Activated CD8-positive, alpha-beta memory T cell treated with anti-CD3 and anti-CD28 coated beads, Interleukin-2, amount 10 ng/mL, durations not matched to agents 7 days and 5 days (primary cell): ENCODE measurements at regions of chr16 and their contacts with region 1.

Region 1: DNA sequence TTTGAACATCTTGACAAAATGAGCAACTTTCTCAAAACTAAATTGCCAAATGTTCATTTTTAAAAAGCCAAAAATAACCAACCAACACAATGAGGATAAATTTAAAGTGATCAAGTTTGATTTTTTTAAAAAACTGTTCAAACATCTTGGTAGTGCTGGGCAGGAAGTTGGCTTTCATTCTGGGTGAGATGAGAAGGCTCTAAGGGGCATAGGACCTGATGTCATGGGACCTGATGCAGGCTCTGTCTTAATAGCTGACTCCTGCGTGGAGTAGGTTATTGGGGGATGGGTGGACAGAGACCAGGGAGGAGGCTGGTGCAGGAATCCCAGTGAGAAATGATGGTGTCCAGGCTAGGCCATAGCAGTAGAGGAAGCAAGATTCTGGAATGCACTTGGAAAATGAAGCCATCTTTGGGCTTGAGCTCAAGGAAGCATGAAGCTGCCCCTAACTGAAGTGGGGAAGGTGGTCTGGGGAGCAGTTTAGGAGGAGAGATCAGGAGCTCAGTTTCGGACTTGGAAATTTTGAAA is 20.4 kb downstream of the NLRC5 start:
- DNase-seq: no peak
- ATAC-seq: peak; percentile 35
- H3K4me3 Mint-ChIP-seq: peak overlapping the region; percentile 32
- H3K27ac Mint-ChIP-seq: peak overlapping the region; percentile 89
- H3K4me1 Mint-ChIP-seq: peaks cover 83% of the 10 kb centered on the region
- H3K27me3 Mint-ChIP-seq: no peaks in the 10 kb centered on the region

Region 2: DNA sequence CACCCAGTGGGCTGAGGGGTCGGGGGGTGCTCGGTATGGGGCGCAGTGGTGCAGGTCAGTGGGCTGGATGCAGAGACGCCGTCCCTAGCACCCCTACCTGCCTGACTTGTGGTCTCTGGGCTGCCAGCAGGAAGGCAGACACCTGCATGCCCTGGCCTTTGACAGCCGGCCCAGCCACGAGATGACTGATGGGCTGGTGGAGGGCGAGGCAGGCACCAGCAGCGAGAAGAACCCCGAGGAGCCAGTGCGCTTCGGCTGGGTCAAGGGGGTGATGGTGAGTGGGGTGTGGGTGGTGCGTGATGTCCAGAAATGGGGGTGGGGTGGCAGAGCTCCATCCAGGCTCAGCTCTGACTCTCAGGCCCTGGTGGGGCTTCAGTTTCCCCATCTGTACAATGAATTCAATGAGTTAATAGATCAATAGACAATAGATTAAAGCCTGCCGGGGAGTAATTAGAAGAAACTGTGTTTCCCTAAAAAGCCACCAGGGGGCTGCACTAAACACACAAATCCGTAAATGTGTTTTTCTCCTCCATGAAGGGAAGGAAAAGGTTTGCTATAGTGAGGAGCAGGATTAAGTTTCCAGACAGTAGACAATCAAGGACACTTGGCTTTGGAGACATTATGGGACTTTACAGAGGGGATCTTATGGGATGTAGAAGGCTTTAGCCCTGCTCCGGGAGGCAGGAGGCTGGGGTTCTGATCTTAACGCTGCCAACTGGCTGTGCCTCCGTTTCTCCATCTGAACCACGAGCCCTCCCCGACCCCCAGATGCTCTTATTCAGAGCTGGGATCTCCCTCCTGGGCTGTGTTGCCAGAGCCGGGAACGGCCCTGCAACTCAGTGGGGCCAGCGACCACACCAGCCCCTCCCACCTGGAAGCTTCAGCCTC is 142.5 kb before region 1 on chr16:
- CTCF ChIA-PET with region 1: no interaction called
- DNase-seq: peak; percentile 56
- ATAC-seq: no peak
- H3K4me3 Mint-ChIP-seq: no peak overlapping the region
- H3K27ac Mint-ChIP-seq: no peak overlapping the region
- H3K4me1 Mint-ChIP-seq: peaks cover 31% of the 10 kb centered on the region
- H3K27me3 Mint-ChIP-seq: peaks cover 2% of the 10 kb centered on the region

Region 3: GRCh38 chr16:56907401-56907800 is 102.3 kb before region 1 on chr16:
- CTCF ChIA-PET with region 1: no interaction called
- DNase-seq: no peak
- ATAC-seq: no peak
- H3K4me3 Mint-ChIP-seq: no peak overlapping the region
- H3K27ac Mint-ChIP-seq: no peak overlapping the region
- H3K4me1 Mint-ChIP-seq: peaks cover 14% of the 10 kb centered on the region
- H3K27me3 Mint-ChIP-seq: peaks cover 31% of the 10 kb centered on the region

Region 4: GRCh38 chr16:56995136-56995805 is 14.4 kb before region 1 on chr16:
- CTCF ChIA-PET with region 1: interaction called, 12 read pairs
- DNase-seq: no peak
- ATAC-seq: no peak
- H3K4me3 Mint-ChIP-seq: peak overlapping the region; percentile 99
- H3K27ac Mint-ChIP-seq: peak overlapping the region; percentile 74
- H3K4me1 Mint-ChIP-seq: peaks cover 86% of the 10 kb centered on the region
- H3K27me3 Mint-ChIP-seq: no peaks in the 10 kb centered on the region

Region 5: GRCh38 chr16:57394444-57394843 is 384.7 kb after region 1 on chr16:
- CTCF ChIA-PET with region 1: no interaction called
- DNase-seq: no peak
- ATAC-seq: no peak
- H3K4me3 Mint-ChIP-seq: no peak overlapping the region
- H3K27ac Mint-ChIP-seq: no peak overlapping the region
- H3K4me1 Mint-ChIP-seq: no peaks in the 10 kb centered on the region
- H3K27me3 Mint-ChIP-seq: peaks cover 3% of the 10 kb centered on the region